ENCODE measurements at regions of chr4 and their contacts with region 1.

Region 1: DNA sequence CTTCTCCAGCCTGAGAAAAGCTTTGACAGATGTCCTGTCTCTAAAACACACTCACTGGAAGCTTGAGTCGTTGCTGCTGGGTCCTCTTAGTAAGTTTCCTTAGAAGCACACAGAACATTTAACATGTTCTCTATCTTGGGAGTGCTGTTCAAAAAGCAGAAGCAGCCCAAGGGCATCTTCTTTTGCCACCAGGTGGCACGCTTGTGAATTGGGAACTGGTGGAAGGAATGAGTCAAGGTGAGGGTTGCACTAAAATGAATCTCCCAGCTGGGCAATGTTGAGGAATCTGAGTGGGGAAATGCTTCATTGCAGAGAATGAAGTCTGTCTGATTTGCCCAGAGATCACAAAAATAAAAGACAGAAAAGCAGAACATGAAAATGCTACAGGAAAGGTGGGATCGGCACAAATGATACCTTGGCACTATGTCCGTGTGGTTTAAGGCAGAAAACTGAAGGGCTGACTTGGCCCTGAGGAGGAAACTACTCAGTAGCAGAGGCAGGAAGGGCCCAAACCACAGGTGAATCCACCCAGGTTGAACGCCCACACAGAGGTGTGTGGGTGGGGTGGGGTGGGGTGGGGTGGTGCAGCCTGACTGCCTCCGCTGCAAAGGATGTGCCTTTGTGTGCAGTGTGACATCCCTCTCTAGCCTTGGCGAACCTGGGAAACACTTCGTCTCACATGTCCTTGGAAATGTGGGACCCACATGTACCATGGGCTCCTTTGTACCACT is 26.0 kb downstream of the KIT start:
- DNase-seq: peak; percentile 56
- H3K4me3 ChIP-seq: no peak overlapping the region
- H3K27ac ChIP-seq: no peak overlapping the region
- H3K4me1 ChIP-seq: no peaks in the 10 kb centered on the region
- H3K27me3 ChIP-seq: peaks cover 3% of the 10 kb centered on the region
- CTCF ChIP-seq: peak; percentile 61 to 83

Region 2: DNA sequence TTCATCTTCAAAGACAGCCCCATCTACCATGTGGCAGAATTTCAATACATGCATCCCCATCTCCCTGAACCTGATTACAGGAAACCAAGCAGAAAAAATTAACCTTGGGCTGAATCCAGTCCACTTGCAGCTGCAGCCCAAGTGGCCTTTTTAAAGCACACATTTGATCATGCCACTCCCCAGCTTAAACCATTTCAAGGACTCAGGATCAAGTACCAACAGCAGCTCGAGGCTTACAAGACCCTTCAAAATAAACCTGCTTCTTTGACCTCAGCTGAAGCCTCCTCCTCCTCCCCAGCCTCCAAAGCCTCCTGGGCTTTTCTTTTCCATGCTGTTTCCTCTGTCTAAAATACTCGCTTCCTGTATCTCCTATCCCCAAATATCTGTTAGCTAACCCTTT is 76.7 kb before region 1 on chr4:
- CTCF ChIA-PET with region 1: no interaction called
- dilution Hi-C with region 1: loop called (anchors 5 kb)
- in situ Hi-C with region 1: no loop called
- intact Hi-C with region 1: no loop called
- DNase-seq: no peak
- H3K4me3 ChIP-seq: no peak overlapping the region
- H3K27ac ChIP-seq: no peak overlapping the region
- H3K4me1 ChIP-seq: no peaks in the 10 kb centered on the region
- H3K27me3 ChIP-seq: no peaks in the 10 kb centered on the region
- CTCF ChIP-seq: no peak

Region 3: DNA sequence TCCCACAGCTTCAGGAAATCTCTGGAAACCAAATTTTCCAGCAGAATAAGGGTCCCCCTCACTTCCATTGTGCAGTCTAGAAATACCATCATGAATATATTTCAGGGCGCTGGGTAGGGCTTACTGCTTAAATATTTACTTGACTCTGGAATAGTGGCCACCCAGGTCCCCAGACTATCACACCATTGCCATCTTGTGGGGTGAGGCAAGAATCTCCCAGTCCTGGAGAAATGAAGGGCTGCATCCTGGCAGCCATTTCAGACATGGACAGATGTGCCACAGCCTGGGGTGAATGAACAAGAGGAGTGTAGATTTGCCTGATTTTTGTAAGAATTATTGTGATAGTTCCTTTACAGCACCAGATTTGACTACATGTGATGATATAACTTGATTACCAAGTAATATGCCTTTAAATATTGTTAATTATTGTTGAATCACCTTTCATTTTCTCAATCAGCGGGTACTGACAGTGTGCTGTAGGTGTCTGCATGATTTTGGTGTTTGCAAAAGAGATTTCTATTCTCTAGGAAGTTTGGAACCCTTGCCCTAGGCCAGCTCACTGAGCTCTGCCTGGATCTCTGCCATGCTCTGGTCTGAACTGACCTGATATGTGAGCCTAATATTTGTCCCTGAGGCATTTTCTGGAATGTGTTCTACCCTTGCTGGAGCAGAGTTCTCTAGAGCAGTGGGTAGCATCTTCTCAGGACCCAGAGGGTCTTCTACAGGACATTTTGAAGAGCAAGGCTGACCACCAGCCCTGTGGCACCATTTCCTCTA is 157.4 kb after region 1 on chr4:
- CTCF ChIA-PET with region 1: no interaction called
- dilution Hi-C with region 1: no loop called
- in situ Hi-C with region 1: no loop called
- intact Hi-C with region 1: loop called (anchors 1 kb)
- DNase-seq: no peak
- H3K4me3 ChIP-seq: no peak overlapping the region
- H3K27ac ChIP-seq: no peak overlapping the region
- H3K4me1 ChIP-seq: no peaks in the 10 kb centered on the region
- H3K27me3 ChIP-seq: peaks cover 9% of the 10 kb centered on the region
- CTCF ChIP-seq: peak in 1 of 2 donors; percentile 55

Region 4: DNA sequence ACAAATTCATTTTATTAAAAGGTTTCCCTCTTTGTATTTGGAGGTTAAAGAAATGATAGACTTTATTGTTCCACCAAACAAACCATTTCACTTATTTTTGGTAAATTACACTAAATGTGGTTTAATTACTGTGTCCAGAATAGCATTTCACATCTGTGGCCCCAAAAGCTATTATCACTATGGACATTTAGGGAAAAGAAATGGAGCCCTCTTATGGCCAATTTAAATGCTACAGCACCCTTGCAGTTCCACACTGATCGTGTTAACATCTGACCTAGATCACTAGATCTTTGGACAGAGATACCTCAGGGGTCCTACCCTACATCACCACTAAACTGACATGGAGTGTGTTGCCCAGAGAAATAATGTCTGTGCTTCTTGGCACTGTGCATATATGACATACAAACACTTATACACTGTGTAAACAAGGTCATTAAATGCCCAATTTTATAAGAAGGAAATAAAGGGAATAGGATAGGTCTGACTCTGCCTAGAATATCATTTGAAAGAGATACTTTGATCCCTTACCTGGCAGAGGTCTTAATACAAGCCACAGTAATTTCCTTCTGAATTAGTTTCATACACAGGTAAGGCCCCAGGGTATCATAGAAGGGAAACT is 277.7 kb after region 1 on chr4:
- CTCF ChIA-PET with region 1: interaction called, 3 read pairs
- dilution Hi-C with region 1: no loop called
- in situ Hi-C with region 1: loop called in 1 of 2 experiments (anchors 10 kb)
- intact Hi-C with region 1: loop called (anchors 1 kb)
- DNase-seq: peak; percentile 14
- H3K4me3 ChIP-seq: no peak overlapping the region
- H3K27ac ChIP-seq: no peak overlapping the region
- H3K4me1 ChIP-seq: no peaks in the 10 kb centered on the region
- H3K27me3 ChIP-seq: peaks cover 2% of the 10 kb centered on the region
- CTCF ChIP-seq: peak; percentile 68 to 74